ENCODE measurements at regions of chr14 and their contacts with region 1.

Region 1: DNA sequence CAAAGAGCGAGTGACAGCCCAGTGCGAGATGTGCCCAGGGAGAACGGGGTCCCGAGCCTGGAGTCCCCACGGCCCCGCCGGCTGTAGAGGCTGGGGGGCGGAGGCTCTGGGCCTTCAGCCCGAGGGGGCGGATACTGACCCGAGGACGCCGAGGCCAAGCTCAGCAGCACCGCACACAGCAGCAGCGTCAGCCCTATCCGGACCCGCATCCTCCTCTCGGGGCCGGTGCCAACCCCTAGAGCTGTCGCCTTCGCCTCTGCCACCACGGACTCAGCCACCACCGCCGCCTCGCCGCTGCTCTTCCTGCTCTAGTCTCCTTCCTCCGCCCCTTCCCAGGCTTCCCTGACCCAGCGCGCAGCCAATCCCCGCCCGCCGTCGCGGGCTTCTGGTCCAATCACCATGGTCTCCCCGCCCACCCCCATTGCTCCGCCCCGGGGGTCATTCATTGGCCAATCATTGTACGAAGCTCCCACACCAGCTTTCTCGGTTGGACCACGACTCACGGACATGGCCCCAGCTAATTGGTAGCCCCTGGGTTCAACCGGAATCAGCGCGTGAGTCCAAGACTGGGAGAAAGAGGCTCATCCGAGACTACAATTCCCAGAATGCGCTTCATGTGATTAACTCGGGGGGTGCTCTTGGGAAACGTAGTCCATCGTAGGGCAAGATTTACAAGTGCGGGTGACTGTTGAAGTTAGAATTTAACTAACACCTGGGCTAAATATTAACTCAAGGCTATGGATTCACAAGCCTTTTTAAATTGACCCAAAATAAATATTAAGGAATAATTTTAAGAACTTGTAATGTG is at the start of gene SEL1L:
- DNase-seq: peak; percentile 100
- H3K4me3 ChIP-seq: peak within 1 kb of the TSS; percentile 84
- H3K27ac ChIP-seq: no peak within 1 kb of the TSS
- H3K4me1 ChIP-seq: peaks cover 48% of the 10 kb centered on the region
- CTCF ChIP-seq: no peak
- total RNA-seq, gene SEL1L: 58.3 and 68.8 TPM in 2 replicates

Region 2: DNA sequence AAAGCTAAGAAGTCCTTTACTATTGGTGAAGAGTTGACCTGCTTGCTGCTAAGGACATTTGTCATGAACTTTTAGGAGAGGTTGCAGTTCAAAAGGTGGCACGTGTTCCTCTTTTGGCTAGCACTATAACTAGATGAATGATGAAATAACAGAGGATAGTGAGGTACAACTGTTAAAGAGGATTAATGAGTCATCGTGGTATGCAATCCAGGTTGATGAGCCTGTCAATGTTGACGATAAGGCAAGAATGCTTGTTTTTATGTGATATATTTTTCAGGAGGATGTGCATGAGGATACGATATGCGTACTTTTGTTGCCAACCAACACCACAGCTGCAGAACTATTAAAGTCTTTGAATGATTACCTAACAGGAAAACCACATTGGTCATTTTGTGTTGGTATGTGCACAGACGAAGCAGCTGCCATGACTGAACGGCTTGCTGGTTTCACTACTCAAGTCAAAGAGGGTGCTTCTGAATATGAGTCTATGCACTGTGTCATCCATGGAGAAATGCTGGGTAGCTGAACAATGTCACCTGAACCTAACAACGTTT is 602.8 kb before region 1 on chr14:
- CTCF ChIA-PET with region 1: no interaction called
- POLR2A ChIA-PET with region 1: interaction called, 5 read pairs
- intact Hi-C with region 1: loop called (anchors 10 kb)
- DNase-seq: peak; percentile 94
- H3K4me3 ChIP-seq: peak overlapping the region; percentile 42
- H3K27ac ChIP-seq: peak overlapping the region; percentile 97
- H3K4me1 ChIP-seq: peaks cover 80% of the 10 kb centered on the region
- CTCF ChIP-seq: no peak

Region 3: DNA sequence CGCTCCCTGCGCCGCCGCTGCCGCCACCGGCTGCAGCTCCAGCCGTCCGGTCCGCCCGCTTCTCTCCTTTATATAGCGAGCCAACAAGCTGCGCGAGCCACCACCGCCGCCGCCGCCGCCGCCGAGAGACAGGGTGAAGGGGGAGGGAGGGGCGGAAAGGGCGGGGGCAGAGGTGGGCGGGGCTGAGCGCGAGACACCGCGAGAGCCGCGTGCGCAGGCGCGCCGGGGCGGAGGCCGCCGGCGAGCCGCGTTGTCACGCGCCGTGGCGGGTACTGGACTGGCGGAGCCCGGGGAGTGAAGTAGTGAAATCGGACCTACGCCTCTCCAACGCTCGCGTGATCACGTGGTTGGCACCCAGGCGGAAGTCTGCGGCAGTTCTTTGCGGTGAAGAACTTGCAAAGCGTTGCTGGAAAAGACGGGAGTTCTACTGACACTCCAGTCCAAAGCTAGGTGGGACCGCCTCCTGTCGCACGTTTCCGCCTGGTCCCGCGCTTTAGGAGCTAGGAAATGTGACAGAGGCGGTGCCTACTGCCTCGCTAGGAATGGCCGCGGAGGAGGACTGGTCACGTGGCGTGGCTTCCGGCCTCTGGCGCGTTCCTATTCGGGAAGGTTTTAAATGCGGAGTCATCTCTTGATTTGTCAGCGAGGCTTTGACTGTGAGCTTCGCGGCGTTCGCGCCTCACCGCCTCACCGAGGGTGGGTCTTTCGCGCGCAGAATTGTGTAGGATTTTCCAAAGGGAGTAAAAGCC is 312.7 kb before region 1 on chr14 and contains the start of gene GTF2A1:
- CTCF ChIA-PET with region 1: no interaction called
- POLR2A ChIA-PET with region 1: interaction called, 14 read pairs
- intact Hi-C with region 1: loop called (anchors 2 kb)
- DNase-seq: peak; percentile 97
- H3K4me3 ChIP-seq: peak within 1 kb of the TSS; percentile 92
- H3K27ac ChIP-seq: peak within 1 kb of the TSS; percentile 93
- H3K4me1 ChIP-seq: peaks cover 34% of the 10 kb centered on the region
- CTCF ChIP-seq: no peak
- total RNA-seq, gene GTF2A1: 32.5 and 35.1 TPM in 2 replicates

Region 4: DNA sequence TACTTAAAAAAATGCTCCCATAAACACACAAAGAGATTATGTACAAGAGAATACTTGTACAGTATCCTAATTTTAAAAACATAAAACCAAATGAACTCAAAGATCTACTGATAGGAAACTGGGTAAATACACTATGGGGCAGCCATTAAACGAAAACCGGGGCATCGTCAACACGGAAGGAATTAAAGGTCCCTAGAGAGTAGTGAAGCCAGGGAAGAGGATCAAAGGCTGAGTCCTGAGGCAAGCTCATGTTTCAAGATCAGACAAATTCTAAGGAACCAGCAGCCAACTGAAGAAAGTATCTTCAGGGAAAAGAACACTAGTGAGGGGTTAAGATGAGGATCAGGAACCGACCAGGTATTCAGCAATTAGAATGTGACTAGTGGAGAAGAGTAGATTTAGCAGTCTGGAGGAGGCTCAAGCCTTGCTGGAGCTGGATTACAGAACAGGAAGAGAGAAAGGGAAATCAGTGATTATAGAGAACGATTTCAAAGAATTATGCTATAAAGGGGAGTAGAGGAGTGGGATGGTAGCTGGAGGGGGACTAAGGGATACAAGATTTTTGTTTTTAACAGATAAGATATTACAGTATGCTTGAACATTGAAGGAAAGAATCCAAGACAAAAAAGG is 23.8 kb before region 1 on chr14:
- CTCF ChIA-PET with region 1: no interaction called
- POLR2A ChIA-PET with region 1: interaction called, 13 read pairs
- intact Hi-C with region 1: no loop called
- DNase-seq: no peak
- H3K4me3 ChIP-seq: no peak overlapping the region
- H3K27ac ChIP-seq: no peak overlapping the region
- H3K4me1 ChIP-seq: no peaks in the 10 kb centered on the region
- CTCF ChIP-seq: no peak

Region 5: DNA sequence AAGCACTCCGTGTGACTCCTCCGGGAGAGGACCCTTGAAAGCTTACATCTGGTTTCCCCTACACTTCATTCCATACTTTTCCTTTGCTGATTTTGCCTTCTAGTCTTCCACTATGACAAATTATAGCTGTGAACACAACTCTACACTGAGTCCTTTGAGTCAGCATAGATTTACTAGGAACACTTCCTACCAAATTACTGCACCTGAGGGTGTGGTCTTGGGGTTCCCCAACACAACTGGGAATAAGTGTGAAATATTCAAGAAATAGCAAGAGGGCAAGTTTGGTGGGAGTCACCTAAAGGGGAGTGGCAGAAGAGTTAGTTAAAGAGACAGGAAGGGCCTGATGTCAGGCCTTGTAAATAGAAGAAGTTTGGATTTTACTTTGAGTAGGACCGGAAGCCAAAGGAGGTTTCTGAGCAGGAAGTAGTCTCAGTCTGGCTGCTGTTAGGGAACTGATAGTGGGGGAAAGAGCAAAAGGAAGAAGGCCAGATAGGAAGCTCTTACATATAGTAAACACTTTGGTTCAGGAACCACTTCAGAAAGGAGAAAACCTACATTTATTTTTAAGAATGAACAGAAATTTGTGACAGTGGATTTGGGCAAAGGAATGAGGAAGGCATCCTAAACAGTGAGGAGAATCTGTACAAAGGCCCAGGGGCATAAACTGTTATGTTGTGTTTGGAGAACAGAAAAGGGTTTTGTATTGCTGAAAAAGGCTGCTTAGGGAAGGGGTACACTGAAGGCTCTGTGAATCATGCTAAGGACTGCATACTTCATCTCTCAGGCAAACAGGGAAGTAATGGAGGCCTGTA is 14.3 kb before region 1 on chr14:
- CTCF ChIA-PET with region 1: no interaction called
- POLR2A ChIA-PET with region 1: interaction called, 46 read pairs
- intact Hi-C with region 1: no loop called
- DNase-seq: no peak
- H3K4me3 ChIP-seq: no peak overlapping the region
- H3K27ac ChIP-seq: no peak overlapping the region
- H3K4me1 ChIP-seq: peaks cover 5% of the 10 kb centered on the region
- CTCF ChIP-seq: no peak

Measured in OCI-LY7 (cell line).